Calu3 (cell line): ENCODE measurements at regions of chr2 and their contacts with region 1.

Region 1: DNA sequence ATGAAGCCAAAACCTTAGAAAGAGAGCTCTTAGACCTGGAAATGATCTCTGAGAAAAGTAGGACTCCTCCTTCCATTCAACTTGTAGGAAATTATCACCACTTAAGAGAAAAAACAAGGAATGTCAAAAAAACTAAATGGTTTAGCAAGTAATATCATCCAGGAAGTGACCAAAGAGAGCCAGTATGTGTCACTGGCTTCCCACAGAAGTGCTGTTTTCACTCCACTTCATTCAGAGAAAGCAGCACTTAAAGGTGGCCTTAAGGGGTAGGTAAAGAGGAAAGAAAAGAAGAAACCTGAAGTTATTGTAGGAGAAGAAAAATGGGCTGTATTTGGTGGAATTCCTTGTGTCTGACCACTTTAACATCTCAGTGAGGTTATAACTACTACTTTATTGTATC is 414.4 kb upstream of the ETAA1 start:
- DNase-seq: no peak
- H3K4me3 Mint-ChIP-seq: no peak overlapping the region
- H3K27ac Mint-ChIP-seq: no peak overlapping the region
- H3K4me1 Mint-ChIP-seq: no peaks in the 10 kb centered on the region
- H3K27me3 Mint-ChIP-seq: no peaks in the 10 kb centered on the region
- CTCF ChIP-seq: no peak

Region 2: GRCh38 chr2:66013465-66013864 is 969.3 kb before region 1 on chr2:
- CTCF ChIA-PET with region 1: no interaction called
- intact Hi-C with region 1: loop called (anchors 5 kb)
- DNase-seq: peak; percentile 6
- H3K4me3 Mint-ChIP-seq: no peak overlapping the region
- H3K27ac Mint-ChIP-seq: no peak overlapping the region
- H3K4me1 Mint-ChIP-seq: no peaks in the 10 kb centered on the region
- H3K27me3 Mint-ChIP-seq: no peaks in the 10 kb centered on the region
- CTCF ChIP-seq: no peak

Region 3: DNA sequence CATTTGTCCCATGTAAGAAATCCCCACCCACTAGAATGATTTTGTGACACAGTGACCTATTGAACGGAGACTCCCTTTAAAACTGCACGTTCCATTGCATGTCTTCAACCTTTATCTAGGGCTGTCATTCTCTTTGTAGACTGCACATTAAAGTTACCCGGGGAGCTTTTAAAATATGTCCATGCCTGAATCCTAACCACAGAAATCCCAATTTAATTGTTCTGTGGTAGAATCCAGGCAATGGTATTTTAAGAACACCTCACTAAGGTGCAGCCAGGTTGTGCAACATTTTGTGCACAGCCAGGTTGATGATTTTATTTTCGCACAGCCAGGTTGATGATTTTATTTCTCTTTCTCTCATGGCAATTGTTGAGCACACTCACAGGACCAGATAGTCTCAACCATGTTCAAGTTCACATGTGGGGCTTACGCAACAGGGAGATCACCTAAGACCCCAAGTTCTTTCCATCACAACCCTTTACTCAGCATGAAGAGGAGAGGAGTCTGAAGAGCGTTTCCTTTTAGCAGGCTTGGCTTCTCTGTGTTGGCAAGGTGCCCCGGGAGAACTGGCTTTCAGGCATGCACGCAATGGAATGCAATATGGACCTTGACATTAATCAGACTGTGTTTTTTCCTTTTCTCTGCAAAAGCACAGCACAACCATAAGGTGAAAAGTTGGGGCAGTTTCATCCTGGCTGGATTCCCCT is 53.0 kb before region 1 on chr2:
- CTCF ChIA-PET with region 1: no interaction called
- intact Hi-C with region 1: no loop called
- DNase-seq: peak; percentile 82
- H3K4me3 Mint-ChIP-seq: peak overlapping the region; percentile 52
- H3K27ac Mint-ChIP-seq: peak overlapping the region; percentile 84
- H3K4me1 Mint-ChIP-seq: peaks cover 37% of the 10 kb centered on the region
- H3K27me3 Mint-ChIP-seq: no peaks in the 10 kb centered on the region
- CTCF ChIP-seq: no peak